CD4-positive, alpha-beta memory T cell (primary cell): ENCODE measurements at regions of chr10 and their contacts with region 1.

Region 1: DNA sequence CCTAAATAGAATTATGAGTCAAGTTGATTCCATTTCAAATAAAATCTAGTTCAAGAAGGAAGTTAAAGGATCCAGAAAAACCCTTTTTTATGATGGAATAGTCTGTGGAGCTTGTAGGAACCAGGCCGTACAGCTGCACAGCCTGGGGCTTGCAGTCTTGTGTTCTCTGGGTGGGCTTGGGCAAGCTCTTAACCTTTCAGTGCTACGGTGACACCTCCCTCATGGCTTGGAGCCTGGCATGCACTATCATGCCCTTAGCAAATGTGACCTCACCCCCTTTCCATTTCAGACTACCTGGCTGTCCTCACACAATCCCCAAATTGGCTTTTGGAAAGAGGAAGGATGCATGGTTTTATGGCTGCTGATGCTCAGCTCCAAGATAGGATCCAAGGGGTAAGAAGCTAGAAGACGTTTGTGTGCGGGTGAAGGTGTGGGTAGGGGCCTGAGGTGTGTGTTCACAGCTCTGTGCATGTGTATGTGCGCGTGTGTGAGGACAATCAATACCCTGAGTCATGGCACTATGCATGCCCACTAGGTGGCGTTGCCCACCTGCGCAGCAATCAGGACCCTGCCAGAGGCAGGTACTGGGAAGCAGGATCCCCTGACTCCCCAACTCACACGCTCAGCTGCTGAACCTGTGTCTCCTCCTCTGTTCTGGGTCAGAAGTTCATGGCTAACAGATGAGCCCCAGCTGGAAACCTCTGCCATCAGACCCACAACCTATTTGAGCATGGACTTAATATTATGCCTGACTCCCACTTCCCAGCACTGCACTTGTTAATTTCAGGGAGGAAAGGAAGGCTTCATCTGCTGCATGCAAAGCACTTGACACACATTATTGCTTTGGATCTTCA is 113.4 kb downstream of the PTPN20 start:
- DNase-seq: peak in 4 of 5 donors; percentile 51 to 62 (median 55)
- H3K4me3 ChIP-seq: no peak overlapping the region
- H3K4me3 Mint-ChIP-seq: no peak overlapping the region
- H3K27ac ChIP-seq: no peak overlapping the region
- H3K27ac Mint-ChIP-seq: peak overlapping the region in 2 of 7 donors; percentile 21 to 74
- H3K4me1 ChIP-seq: peaks cover 6% of the 10 kb centered on the region
- H3K4me1 Mint-ChIP-seq: peaks cover 0 to 4% (median 2%) of the 10 kb centered on the region in 4 donors
- H3K27me3 ChIP-seq: no peaks in the 10 kb centered on the region
- H3K27me3 Mint-ChIP-seq: peaks cover 0 to 1% of the 10 kb centered on the region in 2 donors

Region 2: DNA sequence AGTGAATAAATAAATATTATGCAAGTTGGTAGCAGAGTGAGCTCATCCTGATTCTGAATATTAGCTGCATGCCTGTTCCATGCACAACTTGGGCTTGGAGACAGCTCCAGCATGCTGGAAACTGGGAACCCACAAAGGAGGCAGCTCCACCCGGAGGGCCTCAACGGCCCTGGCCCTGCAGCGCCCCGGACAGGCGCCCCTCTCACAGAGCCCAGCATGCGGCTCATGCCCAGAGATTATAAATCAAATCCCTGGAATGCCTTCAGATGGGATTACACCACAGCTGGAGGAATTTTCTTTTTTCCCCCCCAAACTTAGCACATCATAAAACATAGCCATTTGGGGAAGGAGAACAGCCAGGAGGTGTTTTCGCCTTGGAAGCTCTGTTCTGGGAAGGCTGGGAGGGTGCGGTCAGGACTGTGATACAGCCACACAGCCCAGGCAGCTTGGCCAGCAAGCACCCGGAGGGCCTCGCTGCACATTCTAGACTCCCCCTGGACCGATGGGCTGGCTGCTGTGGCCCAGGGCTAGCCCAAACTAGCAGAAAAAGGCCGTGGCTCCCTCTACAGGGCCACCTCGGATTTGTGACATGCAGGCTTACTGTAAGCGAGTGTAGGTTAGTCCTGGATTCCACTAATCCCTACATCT is 11.0 kb before region 1 on chr10:
- CTCF ChIA-PET with region 1: interaction called, 14 read pairs
- POLR2A ChIA-PET with region 1: no interaction called
- intact Hi-C with region 1: no loop called
- DNase-seq: no peak
- H3K4me3 ChIP-seq: no peak overlapping the region
- H3K4me3 Mint-ChIP-seq: no peak overlapping the region
- H3K27ac ChIP-seq: no peak overlapping the region
- H3K27ac Mint-ChIP-seq: no peak overlapping the region
- H3K4me1 ChIP-seq: no peaks in the 10 kb centered on the region
- H3K4me1 Mint-ChIP-seq: no peaks in the 10 kb centered on the region
- H3K27me3 ChIP-seq: no peaks in the 10 kb centered on the region
- H3K27me3 Mint-ChIP-seq: peaks cover 10 to 21% of the 10 kb centered on the region in 2 donors

Region 3: DNA sequence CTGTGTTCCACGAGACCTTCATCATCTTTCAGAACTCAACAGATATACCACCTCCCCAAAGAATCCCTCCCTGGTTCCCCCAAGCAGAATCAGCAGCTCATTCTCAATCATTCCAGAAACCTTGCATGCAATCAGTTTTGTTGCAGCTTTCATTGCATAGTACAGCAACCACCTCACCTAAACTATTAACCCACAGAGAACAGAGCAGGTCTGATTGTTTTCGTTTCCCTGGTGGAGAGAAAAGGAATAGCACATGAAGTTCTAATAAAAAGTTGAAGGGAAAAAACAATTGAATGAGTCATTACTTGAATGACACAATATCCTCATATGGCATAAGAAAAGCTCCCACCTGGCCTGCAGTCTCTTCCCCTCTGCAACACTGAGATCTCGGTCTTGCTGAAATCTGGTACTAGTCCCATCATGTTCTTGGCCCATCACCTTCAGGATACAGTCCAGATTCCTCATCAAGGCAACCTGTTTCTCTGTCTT is 128.3 kb after region 1 on chr10:
- CTCF ChIA-PET with region 1: no interaction called
- POLR2A ChIA-PET with region 1: no interaction called
- intact Hi-C with region 1: no loop called
- DNase-seq: no peak
- H3K4me3 ChIP-seq: no peak overlapping the region
- H3K4me3 Mint-ChIP-seq: no peak overlapping the region
- H3K27ac ChIP-seq: no peak overlapping the region
- H3K27ac Mint-ChIP-seq: no peak overlapping the region
- H3K4me1 ChIP-seq: no peaks in the 10 kb centered on the region
- H3K4me1 Mint-ChIP-seq: peaks cover 0 to 4% (median 0%) of the 10 kb centered on the region in 4 donors
- H3K27me3 ChIP-seq: no peaks in the 10 kb centered on the region
- H3K27me3 Mint-ChIP-seq: peaks cover 0 to 3% of the 10 kb centered on the region in 2 donors

Region 4: GRCh38 chr10:47318706-47319105 is 294.1 kb after region 1 on chr10:
- CTCF ChIA-PET with region 1: interaction called, 101 read pairs
- POLR2A ChIA-PET with region 1: no interaction called
- intact Hi-C with region 1: no loop called
- DNase-seq: no peak
- H3K4me3 ChIP-seq: no peak overlapping the region
- H3K4me3 Mint-ChIP-seq: no peak overlapping the region
- H3K27ac ChIP-seq: no peak overlapping the region
- H3K27ac Mint-ChIP-seq: no peak overlapping the region
- H3K4me1 ChIP-seq: no peaks in the 10 kb centered on the region
- H3K4me1 Mint-ChIP-seq: no peaks in the 10 kb centered on the region
- H3K27me3 ChIP-seq: no peaks in the 10 kb centered on the region
- H3K27me3 Mint-ChIP-seq: peaks cover 3 to 7% of the 10 kb centered on the region in 2 donors

Region 5: GRCh38 chr10:47340608-47341170 is 316.1 kb after region 1 on chr10:
- CTCF ChIA-PET with region 1: interaction called, 46 read pairs
- POLR2A ChIA-PET with region 1: no interaction called
- intact Hi-C with region 1: loop called (anchors 1 kb)
- DNase-seq: peak; percentile 50 to 62 (median 54)
- H3K4me3 ChIP-seq: no peak overlapping the region
- H3K4me3 Mint-ChIP-seq: no peak overlapping the region
- H3K27ac ChIP-seq: no peak overlapping the region
- H3K27ac Mint-ChIP-seq: no peak overlapping the region
- H3K4me1 ChIP-seq: no peaks in the 10 kb centered on the region
- H3K4me1 Mint-ChIP-seq: no peaks in the 10 kb centered on the region
- H3K27me3 ChIP-seq: no peaks in the 10 kb centered on the region
- H3K27me3 Mint-ChIP-seq: peaks cover 7 to 15% of the 10 kb centered on the region in 2 donors